ENCODE measurements at regions of chr2 and their contacts with region 1.

Region 1: DNA sequence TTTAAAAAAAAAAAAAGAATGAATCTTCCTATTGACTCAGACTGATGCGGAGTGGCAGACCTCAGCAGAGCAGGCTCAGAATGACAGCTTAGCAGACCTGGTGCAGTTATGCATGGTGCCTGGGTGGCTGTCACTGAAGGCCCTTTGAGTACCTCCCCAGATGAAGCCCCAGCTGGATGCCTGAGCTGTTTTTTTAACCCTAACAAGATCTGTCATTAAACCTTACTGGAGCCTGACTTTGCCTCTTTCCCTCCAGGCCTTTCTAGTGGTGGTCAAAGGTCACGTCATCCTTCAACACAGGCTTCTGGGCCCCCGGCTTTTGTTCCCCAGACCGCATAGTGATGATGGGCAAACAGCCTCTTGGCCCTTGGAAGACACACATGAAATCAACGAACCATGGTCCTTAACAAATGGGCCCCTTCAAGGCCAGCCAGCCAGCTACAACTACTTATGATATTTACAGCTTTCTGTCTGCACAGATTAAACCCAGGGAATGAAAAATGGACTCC is 138.3 kb upstream of the CYP1B1 start:
- DNase-seq: peak; percentile 37
- ATAC-seq: no peak
- H3K4me3 ChIP-seq: no peak overlapping the region
- H3K27ac ChIP-seq: no peak overlapping the region
- H3K4me1 ChIP-seq: peaks cover 18% of the 10 kb centered on the region
- H3K27me3 ChIP-seq: no peaks in the 10 kb centered on the region
- CTCF ChIP-seq: no peak

Region 2: GRCh38 chr2:37925063-37925897 is 289.0 kb before region 1 on chr2 and contains the start of gene RMDN2:
- CTCF ChIA-PET with region 1: no interaction called
- POLR2A ChIA-PET with region 1: interaction called, 11 read pairs
- intact Hi-C with region 1: no loop called
- DNase-seq: peak; percentile 90
- ATAC-seq: peak; percentile 95
- H3K4me3 ChIP-seq: peak within 1 kb of the TSS; percentile 96
- H3K27ac ChIP-seq: peak within 1 kb of the TSS; percentile 67
- H3K4me1 ChIP-seq: 0 out of 2 replicates have a peak, but pooled peaks cover 4% of the 10 kb centered on the region
- H3K27me3 ChIP-seq: no peaks in the 10 kb centered on the region
- CTCF ChIP-seq: no peak
- total RNA-seq, gene RMDN2: 2.4 and 2.6 TPM in 2 replicates

Region 3: DNA sequence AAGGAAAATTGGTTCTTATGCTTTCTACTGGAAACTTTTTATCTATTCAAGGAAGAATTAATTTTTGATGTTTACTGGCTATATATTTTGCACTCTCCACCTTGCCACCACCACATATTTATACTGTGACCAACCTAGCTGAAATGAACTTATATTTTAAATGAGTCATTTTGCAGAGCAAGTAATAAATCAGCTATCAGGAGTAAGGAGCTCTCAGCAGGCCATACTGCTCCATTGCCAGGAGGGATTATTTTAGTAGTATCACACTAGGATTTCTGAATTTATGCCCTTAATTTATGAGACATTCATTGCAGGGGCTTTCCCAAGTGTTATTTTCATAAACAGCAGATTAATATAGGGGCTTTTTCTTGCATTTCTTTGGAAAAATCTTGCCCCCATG is 12.5 kb before region 1 on chr2:
- CTCF ChIA-PET with region 1: no interaction called
- POLR2A ChIA-PET with region 1: no interaction called
- intact Hi-C with region 1: no loop called
- DNase-seq: peak; percentile 49
- ATAC-seq: peak; percentile 74
- H3K4me3 ChIP-seq: no peak overlapping the region
- H3K27ac ChIP-seq: no peak overlapping the region
- H3K4me1 ChIP-seq: peaks cover 11% of the 10 kb centered on the region
- H3K27me3 ChIP-seq: no peaks in the 10 kb centered on the region
- CTCF ChIP-seq: no peak

Region 4: GRCh38 chr2:38233231-38233983 is 19.1 kb after region 1 on chr2:
- CTCF ChIA-PET with region 1: no interaction called
- POLR2A ChIA-PET with region 1: no interaction called
- intact Hi-C with region 1: no loop called
- DNase-seq: peak; percentile 15
- ATAC-seq: no peak
- H3K4me3 ChIP-seq: no peak overlapping the region
- H3K27ac ChIP-seq: no peak overlapping the region
- H3K4me1 ChIP-seq: no peaks in the 10 kb centered on the region
- H3K27me3 ChIP-seq: no peaks in the 10 kb centered on the region
- CTCF ChIP-seq: no peak; the same call in 1 of the 2 replicates

Region 5: DNA sequence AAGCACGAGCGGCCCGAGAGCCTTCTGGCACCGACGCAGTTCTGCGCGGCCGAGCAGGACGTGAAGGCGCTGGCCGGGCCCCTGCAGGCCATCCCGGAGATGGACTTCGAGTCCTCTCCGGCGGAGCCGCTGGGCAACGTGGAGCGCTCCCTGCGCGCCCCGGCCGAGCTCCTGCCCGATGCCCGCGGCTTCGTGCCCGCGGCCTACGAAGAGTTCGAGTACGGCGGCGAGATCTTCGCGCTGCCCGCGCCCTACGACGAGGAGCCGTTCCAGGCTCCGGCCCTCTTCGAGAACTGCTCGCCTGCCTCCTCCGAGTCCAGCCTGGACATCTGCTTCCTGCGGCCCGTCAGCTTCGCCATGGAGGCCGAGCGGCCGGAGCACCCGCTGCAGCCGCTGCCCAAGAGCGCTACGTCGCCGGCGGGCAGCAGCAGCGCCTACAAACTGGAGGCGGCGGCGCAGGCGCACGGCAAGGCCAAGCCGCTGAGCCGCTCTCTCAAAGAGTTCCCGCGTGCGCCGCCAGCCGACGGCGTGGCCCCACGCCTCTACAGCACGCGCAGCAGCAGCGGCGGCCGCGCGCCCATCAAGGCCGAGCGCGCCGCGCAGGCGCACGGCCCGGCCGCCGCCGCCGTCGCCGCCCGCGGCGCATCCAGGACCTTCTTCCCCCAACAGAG is 745.8 kb after region 1 on chr2:
- CTCF ChIA-PET with region 1: no interaction called
- POLR2A ChIA-PET with region 1: no interaction called
- intact Hi-C with region 1: no loop called
- DNase-seq: no peak
- ATAC-seq: no peak
- H3K4me3 ChIP-seq: no peak overlapping the region
- H3K27ac ChIP-seq: no peak overlapping the region
- H3K4me1 ChIP-seq: no peaks in the 10 kb centered on the region
- H3K27me3 ChIP-seq: no peaks in the 10 kb centered on the region
- CTCF ChIP-seq: no peak